ENCODE measurements at regions of chr17 and their contacts with region 1.

Region 1: GRCh38 chr17:20206068-20206467 is 196.9 kb downstream of the SPECC1 start:
- ATAC-seq: peak in 3 of 8 experiments; percentile 44 to 77 (median 46)
- H3K4me3 ChIP-seq: no peak overlapping the region
- H3K27ac ChIP-seq: no peak overlapping the region
- H3K4me1 ChIP-seq: no peaks in the 10 kb centered on the region

Region 2: GRCh38 chr17:19992803-19993713 is 213.0 kb before region 1 on chr17:
- in situ Hi-C with region 1: loop called in 1 of 9 experiments (anchors 25 kb)
- ATAC-seq: peak; percentile 91 to 99 (median 98)
- H3K4me3 ChIP-seq: no peak overlapping the region
- H3K27ac ChIP-seq: peak overlapping the region; percentile 43 to 54
- H3K4me1 ChIP-seq: peaks cover 0 to 2% of the 10 kb centered on the region in 2 donors